ENCODE measurements at regions of chr19 and their contacts with region 1.

Region 1: DNA sequence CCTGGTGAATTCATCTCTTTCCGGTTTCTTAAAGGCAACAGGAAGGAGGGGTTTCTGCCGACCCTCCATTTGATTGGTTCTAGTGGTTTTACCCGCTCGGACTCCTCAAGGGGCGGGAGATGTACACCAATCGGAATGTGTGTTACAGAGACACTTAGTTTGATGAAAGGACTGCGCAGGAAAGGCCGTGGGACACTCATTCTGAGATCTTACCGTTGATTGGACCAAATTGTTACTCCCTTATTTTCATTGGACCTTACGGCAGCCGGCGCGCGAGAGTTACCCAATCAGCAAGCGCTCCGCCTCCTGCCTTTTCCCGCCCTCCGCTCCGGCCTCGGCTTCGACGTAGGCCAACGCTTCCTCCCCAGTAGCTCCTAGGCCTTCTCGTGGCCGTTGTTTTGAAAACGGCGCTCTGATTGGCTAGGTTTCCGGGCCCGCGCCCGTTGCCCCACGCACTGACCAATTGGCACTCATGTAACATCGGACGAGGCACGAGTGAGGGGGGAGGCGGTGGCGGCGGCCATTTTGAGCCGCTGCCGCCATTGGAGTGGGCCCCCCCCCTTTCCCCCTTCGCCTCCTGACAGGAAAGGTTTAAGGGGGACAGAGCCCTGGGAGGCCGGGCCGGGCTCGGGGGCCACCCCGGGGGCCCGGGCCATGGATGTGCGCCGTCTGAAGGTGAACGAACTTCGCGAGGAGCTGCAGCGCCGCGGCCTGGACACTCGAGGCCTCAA is at the start of gene HNRNPUL1:
- DNase-seq: peak; percentile 98

Region 2: GRCh38 chr19:41206926-41207750 is 56.9 kb before region 1 on chr19:
- CTCF ChIA-PET with region 1: interaction called, 17 read pairs
- POLR2A ChIA-PET with region 1: interaction called, 48 read pairs
- DNase-seq: no peak

Region 3: DNA sequence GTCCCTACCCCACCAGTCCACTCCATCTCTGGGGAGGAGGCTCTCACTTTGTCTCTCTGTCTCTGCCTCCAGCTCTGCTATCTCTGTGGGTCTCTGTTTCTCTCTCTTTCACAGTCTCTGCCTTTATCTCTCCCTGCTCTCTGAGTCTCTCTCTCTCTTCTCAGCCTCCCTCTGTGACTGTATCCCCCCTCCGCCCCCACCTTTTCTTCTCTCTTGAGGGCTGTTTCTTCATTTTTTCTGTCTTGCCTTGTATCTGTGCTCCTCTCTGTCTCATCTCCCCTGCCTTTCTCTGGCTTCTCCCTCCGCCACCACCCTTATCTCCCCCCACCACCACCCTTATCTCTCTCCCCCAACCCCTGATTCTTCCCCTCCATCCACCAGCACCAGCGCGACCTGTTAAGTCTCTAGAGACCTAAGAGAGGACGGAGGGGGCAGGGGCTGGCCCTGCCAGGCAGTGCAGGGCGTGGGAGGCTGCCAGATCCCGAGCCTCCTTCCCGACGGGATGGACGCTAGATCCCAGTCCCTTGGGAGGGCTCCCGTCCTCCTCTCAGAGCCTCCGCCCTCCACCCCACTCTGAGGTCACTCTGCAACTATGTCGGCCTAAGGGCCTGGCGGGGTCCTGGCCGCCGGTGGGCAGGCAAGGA is 44.0 kb before region 1 on chr19:
- CTCF ChIA-PET with region 1: interaction called, 3 read pairs
- POLR2A ChIA-PET with region 1: interaction called, 12 read pairs
- DNase-seq: no peak

Region 4: GRCh38 chr19:41288673-41289505 is 24.9 kb after region 1 on chr19:
- CTCF ChIA-PET with region 1: no interaction called
- POLR2A ChIA-PET with region 1: no interaction called
- DNase-seq: no peak

Measured in HEK293T (cell line).